Heart right ventricle (tissue), 16 donors: ENCODE measurements at regions of chr2 and their contacts with region 1.

Region 1: DNA sequence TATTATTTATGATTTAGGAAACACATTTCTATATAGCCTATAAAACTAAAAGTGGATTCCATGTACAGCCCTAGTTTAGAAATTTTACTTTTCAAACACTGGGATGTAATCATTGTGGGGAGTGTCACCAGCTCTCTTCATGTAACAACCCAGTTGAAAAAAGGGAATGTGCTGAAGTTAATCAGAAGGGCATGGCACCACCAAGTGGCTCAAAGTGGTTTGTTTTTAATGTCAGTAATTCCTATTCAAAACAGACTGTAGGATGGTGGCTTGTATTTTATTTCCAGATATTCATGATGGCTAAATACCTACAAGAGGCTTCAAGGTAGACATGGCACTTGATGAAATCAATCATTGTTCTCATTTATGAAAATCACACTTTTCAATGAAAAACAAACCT is 58.1 kb upstream of the TMEM182 start:
- DNase-seq: no peak
- ATAC-seq: peak in 4 of 8 donors; percentile 52 to 69 (median 60)
- H3K4me3 ChIP-seq: no peak overlapping the region
- H3K27ac ChIP-seq: no peak overlapping the region
- H3K4me1 ChIP-seq: no peaks in the 10 kb centered on the region
- H3K27me3 ChIP-seq: peaks cover 0 to 52% (median 30%) of the 10 kb centered on the region in 7 donors
- CTCF ChIP-seq: peak in 7 of 9 donors; percentile 34 to 55 (median 42)

Region 2: GRCh38 chr2:102478686-102479470 is 224.9 kb before region 1 on chr2:
- intact Hi-C with region 1: loop called in 6 of 10 experiments (anchors 5 to 10 kb)
- DNase-seq: no peak
- ATAC-seq: no peak
- H3K4me3 ChIP-seq: no peak overlapping the region
- H3K27ac ChIP-seq: no peak overlapping the region
- H3K4me1 ChIP-seq: no peaks in the 10 kb centered on the region
- H3K27me3 ChIP-seq: peaks cover 0 to 48% (median 27%) of the 10 kb centered on the region in 7 donors
- CTCF ChIP-seq: no peak

Region 3: DNA sequence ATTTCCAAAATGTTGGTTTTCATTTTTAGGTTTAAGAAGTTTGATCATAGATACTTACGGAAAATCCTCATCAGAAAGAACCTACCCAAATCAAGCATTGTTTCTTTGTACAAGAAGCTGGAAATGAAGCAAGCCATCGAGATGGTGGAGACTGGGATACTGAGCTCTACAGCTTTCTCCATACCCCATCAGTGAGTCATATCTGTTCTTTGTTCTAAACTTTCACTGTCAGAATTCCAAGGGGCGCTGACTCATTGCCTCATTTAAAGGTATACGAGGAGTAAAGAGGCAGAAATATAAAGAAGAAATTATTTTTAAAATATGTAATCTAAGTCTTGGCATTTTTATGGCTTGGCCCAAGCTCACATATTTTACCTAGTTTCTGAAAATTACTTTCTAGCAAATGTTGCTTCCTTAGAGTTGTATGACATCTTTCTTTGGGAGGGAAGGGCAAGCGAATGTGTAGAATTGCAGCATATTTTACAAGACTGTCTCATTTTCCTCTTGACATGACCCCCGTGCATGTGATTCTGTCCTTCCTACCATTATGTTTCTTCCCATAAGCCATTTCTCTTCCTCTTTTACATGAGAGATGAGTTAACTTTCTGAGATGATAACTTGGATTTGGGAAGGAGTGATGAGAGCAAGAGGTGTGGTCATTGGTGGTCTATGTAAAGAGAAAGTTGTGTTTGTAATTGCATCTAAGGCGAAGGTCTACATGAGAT is 189.5 kb before region 1 on chr2:
- intact Hi-C with region 1: loop called in 1 of 10 experiments (anchors 10 kb)
- DNase-seq: no peak
- ATAC-seq: no peak
- H3K4me3 ChIP-seq: no peak overlapping the region
- H3K27ac ChIP-seq: no peak overlapping the region
- H3K4me1 ChIP-seq: peaks cover 0 to 4% (median 0%) of the 10 kb centered on the region in 9 donors
- H3K27me3 ChIP-seq: peaks cover 0 to 7% (median 0%) of the 10 kb centered on the region in 7 donors
- CTCF ChIP-seq: no peak

Region 4: GRCh38 chr2:102558463-102558862 is 145.3 kb before region 1 on chr2:
- intact Hi-C with region 1: no loop called
- DNase-seq: no peak
- ATAC-seq: no peak
- H3K4me3 ChIP-seq: no peak overlapping the region
- H3K27ac ChIP-seq: no peak overlapping the region
- H3K4me1 ChIP-seq: no peaks in the 10 kb centered on the region
- H3K27me3 ChIP-seq: no peaks in the 10 kb centered on the region
- CTCF ChIP-seq: no peak

Region 5: DNA sequence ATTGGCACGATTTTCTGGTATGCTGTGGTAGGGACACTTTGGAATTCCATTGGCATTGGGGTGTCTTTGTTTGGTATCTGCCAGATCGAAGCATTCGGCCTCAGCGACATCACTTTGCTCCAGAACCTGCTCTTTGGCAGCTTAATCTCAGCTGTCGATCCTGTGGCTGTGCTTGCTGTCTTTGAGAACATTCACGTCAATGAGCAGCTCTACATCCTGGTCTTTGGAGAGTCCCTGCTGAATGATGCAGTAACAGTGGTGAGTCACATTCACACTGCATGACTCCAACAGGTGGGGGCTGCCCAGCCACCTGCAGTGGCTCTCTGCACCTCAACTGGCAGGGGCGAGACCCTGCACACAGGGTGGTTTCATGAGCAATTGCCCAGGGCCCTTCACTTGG is 46.0 kb before region 1 on chr2:
- intact Hi-C with region 1: no loop called
- DNase-seq: no peak
- ATAC-seq: no peak
- H3K4me3 ChIP-seq: no peak overlapping the region
- H3K27ac ChIP-seq: no peak overlapping the region
- H3K4me1 ChIP-seq: no peaks in the 10 kb centered on the region
- H3K27me3 ChIP-seq: peaks cover 0 to 3% (median 0%) of the 10 kb centered on the region in 7 donors
- CTCF ChIP-seq: no peak

Region 6: DNA sequence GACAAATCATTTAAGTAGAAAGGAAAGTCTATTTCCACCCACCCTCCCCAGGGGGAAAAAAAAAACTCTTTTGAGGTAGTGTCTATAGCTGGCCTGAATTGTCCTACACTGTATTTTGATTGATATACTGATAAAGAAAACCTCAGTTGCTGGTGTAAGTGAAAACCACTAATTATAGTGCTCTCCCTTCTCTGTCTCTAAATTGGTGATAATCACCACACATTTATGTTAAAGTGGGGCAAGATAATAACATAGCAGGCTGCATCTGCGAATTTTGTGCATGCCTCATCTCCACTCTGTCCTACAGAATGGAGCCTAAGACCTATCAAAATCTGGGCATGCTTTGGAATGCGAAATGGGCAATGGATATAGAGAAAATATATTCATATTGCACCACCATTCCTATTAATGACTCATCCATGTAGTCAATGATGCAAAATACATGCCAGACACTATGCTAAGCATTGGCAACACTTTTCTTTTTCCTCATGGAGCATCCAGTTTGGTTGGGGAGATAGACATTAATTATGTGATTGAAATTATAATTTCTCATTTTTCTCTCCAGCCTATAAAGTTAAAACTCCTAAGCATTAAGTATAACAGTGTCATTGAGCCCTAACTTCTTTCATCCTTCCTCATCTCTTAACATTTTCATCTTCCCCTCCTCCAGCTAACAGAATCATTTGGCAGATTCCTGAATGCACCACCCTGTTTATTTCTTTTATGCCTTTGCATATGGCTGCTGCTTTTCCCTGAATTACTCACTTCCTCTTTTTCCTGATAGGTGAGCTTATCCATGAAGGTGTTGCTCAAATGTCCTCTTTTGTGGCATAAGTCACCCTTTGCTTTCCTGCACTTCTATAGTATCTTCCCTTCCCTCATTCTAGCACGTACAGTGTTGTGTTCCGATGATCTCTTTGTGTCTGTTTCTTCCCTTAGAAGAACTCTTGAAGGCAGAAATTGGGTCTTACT is 26.2 kb before region 1 on chr2:
- intact Hi-C with region 1: no loop called
- DNase-seq: no peak
- ATAC-seq: no peak
- H3K4me3 ChIP-seq: no peak overlapping the region
- H3K27ac ChIP-seq: no peak overlapping the region
- H3K4me1 ChIP-seq: no peaks in the 10 kb centered on the region
- H3K27me3 ChIP-seq: peaks cover 0 to 10% (median 0%) of the 10 kb centered on the region in 7 donors
- CTCF ChIP-seq: no peak

Region 7: DNA sequence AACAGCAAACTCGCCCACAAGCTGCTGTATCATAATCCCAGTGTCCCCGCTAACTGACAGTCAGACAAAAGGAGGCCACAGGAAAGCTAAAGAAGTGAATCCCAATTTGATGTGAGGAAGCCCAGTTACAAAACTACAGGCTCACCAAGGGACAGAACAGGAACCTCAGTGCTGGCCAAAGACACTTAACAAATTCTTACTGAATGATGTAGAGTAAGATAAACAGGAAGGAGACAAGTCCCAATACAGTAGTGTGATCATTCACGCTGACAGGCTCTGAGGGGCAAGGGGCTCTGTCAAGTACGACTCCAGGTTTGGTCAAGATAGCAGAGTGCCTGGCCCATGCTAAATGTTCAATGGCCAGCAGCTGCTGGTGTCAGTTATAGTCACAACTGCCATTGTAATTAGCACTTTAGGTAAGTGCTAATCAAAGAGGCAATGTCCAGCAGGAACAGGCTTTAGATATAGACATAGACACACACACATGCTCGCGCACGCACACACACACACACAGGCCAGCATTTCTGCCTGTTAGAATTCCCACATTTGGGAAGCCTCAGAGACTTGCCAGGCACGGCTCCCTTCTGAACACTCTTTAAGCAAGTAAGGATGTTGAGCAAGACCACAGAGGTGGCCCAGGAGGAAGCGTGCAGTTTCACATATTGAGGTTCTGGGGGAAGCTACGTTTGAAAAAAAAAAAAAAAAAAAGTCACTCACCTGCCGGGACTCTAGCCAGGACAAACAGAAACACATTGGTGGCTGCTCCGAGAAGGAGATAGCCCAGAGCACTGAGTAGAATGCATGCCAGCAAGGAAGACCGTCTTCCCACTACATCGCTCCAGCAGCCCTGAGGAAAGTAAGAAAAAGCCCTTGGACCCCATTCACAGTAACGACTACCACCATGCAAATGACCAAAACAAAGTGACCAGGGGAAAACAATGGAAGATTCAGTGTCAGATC is 22.7 kb after region 1 on chr2:
- intact Hi-C with region 1: no loop called
- DNase-seq: no peak
- ATAC-seq: peak in 3 of 8 donors; percentile 16 to 50 (median 25)
- H3K4me3 ChIP-seq: no peak overlapping the region
- H3K27ac ChIP-seq: no peak overlapping the region
- H3K4me1 ChIP-seq: no peaks in the 10 kb centered on the region
- H3K27me3 ChIP-seq: no peaks in the 10 kb centered on the region
- CTCF ChIP-seq: no peak